Ascending aorta (tissue), 2 donors: ENCODE measurements at regions of chr1 and their contacts with region 1.

Region 1: DNA sequence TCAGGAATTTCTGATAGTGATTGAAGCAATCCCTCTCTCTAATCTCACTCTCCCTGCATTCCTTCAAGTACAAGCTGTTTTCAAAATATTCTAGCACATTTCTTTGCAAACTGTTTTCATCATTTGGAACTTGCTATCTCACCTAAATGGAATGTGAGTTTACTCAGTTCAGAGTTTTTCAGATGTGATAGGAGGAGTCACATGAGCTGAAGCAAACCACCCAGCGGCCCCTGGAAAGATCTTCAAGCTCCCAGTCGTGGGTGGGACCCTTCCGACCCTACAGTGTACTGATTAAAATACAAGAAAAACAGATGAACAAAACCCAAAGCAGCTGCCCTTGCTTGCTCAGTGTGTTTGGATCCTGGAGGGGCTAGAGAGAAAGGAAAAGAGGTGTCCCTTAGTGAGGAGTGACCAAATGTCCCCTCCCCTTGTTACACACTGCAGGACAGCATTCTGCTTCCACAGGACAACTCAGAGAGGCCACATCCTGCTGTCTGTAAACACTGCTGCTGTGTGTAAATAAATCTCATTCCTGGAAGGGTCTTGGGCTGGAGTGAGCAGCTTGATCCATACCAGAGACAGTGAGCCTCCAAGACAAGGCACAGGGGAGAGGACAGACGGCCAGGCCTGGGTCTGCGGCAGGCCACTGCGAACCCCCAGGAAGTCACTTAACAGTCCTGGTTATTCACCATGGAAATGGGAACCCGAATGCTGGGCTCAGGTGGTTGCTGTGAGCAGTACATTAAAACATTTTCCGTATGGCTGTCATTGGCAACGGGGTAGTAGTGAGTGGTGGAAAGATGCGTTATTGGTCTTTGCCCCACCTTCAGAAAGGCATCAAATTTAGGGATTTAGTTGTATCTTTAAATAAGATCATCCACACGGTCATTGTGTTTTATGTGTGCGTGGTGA is 229.2 kb downstream of the RHOU start:
- DNase-seq: peak in 1 of 2 donors; percentile 78
- H3K4me3 ChIP-seq: no peak overlapping the region
- H3K27ac ChIP-seq: peak overlapping the region; percentile 80 to 91
- H3K4me1 ChIP-seq: peaks cover 3 to 9% of the 10 kb centered on the region in 2 donors
- H3K27me3 ChIP-seq: no peaks in the 10 kb centered on the region
- CTCF ChIP-seq: no peak

Region 2: GRCh38 chr1:228921481-228921880 is 43.0 kb before region 1 on chr1:
- intact Hi-C with region 1: loop called (anchors 5 kb)
- DNase-seq: peak in 1 of 2 donors; percentile 19
- H3K4me3 ChIP-seq: no peak overlapping the region
- H3K27ac ChIP-seq: peak overlapping the region in 1 of 2 donors; percentile 89
- H3K4me1 ChIP-seq: peaks cover 0 to 13% of the 10 kb centered on the region in 2 donors
- H3K27me3 ChIP-seq: no peaks in the 10 kb centered on the region
- CTCF ChIP-seq: no peak

Region 3: DNA sequence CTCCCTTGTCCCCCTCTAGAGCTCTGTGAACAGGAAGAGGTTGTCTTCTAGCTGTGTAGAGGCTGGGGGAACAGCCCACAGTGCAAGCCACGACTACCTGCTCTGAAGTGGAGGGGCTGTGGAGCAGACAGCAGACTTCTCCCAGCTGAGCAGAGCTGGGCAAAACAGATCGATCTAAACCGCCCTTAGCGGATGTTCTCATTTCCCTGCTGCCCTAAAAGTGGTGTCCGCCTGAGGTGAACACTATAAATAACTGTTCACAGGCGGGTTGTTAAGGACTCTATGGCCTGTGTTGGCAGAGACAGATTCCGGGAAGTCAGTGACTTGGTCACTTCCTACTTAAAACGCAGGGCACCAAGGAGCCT is 25.9 kb before region 1 on chr1:
- intact Hi-C with region 1: loop called (anchors 2 kb)
- DNase-seq: peak in 1 of 2 donors; percentile 81
- H3K4me3 ChIP-seq: no peak overlapping the region
- H3K27ac ChIP-seq: peak overlapping the region; percentile 87 to 89
- H3K4me1 ChIP-seq: peaks cover 10 to 27% of the 10 kb centered on the region in 2 donors
- H3K27me3 ChIP-seq: no peaks in the 10 kb centered on the region
- CTCF ChIP-seq: no peak

Region 4: DNA sequence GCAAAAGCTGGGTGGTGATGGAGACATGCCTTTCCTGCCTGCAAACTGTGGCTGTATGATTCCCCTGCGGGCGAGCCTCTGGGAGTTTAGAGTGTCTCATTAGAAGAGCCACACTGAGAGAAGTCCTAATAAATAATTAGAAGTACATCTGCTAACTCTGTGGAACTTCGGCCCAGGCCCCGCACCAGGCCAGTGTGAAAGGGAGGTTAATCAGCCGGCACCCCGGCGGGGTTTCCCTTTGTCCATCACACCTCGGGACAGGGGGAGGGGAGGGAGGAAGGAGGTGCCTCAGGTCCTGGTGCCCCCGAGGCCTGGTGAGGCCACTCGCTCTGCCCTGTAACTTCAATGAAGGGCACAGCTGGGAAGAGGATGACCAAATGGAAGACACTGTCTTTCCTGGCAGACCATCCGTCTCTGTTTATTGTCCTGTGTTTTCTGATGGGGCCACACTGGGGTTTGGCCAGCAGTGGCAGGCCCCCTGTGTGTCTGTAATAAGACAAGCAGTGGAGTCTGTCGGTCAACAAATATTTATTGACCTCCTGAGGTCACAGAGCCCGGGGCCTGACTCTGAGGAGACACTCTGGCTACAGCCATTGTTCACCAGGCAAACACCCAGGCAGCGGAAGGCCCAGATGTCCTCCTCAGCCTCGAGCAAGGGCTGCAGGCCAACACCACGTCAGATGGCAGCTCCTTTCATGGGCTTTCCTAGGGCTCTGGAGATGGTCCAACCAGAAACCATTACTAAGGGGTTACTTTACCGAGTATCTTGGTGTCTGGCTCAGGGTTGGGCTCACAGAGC is 39.0 kb after region 1 on chr1:
- intact Hi-C with region 1: no loop called
- DNase-seq: peak in 1 of 2 donors; percentile 77
- H3K4me3 ChIP-seq: no peak overlapping the region
- H3K27ac ChIP-seq: peak overlapping the region; percentile 54 to 79
- H3K4me1 ChIP-seq: no peaks in the 10 kb centered on the region
- H3K27me3 ChIP-seq: no peaks in the 10 kb centered on the region
- CTCF ChIP-seq: no peak

Region 5: DNA sequence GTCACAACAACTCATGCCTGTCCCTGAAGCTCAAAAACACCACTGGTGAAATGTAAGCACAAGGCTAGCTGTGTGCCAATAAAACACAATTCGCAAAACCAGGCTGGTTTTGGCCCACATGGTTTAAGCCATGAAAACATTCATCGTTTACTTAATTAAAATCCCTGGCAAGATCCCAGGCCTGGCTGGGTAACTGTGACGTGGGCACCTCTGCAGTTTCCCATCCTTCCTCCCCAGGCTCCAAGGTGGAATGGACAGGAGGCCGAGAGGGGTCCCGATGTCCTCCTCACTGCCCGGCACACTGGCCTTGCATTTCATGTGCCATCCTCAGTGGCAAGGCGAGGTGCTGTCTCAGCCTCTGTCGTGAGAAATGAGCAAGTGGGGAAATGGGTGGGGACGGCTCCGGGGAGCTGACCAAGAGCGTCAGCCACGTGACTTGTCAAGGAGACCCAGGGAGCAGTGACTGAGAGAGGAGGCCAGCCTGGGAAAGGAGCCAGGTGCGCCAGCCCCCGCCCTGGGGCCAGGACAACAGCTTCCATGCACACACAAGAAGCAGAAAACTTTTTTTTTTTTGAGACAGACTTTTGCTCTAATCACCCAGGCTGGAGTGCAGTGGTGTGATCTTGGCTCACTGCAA is 153.3 kb after region 1 on chr1:
- intact Hi-C with region 1: loop called (anchors 5 kb)
- DNase-seq: peak; percentile 46 to 94
- H3K4me3 ChIP-seq: no peak overlapping the region
- H3K27ac ChIP-seq: peak overlapping the region; percentile 56 to 72
- H3K4me1 ChIP-seq: peaks cover 4 to 35% of the 10 kb centered on the region in 2 donors
- H3K27me3 ChIP-seq: no peaks in the 10 kb centered on the region
- CTCF ChIP-seq: no peak

Region 6: DNA sequence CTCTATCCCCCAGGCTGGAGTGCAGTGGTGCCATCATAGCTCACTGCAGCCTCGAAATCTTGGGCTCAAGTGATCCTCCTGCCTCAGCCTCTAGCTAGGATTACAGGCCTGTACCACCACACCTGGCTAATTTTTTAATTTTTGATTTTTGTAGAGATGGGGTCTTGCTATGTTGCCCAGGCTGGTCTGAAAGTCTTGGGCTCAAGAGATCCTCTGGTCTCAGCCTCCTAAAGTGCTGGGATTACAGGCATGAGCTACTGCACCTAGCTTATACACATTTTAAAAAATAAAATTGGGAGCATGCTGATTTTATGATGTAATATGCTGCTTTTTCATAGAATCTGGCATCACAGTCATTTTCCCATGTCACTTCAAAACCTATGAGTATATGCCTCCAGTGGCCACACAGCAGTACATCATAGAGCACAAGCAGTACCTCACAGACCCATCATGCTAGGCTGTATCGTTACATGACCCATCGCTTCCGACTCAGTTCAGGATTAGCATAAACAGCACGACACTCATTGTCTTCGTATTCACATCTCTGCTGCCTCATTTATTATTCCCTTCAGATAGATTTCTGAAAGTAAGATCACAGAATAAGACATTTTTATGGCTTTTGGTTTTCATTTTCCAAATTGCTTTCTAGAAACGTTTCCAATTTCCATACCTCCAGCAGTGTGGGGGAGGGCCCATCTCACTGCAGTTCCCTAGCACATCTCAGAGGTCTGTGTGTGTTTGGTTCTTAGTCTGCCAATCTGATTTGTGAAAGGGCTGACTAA is 414.3 kb after region 1 on chr1:
- intact Hi-C with region 1: no loop called
- DNase-seq: no peak
- H3K4me3 ChIP-seq: no peak overlapping the region
- H3K27ac ChIP-seq: no peak overlapping the region
- H3K4me1 ChIP-seq: no peaks in the 10 kb centered on the region
- H3K27me3 ChIP-seq: no peaks in the 10 kb centered on the region
- CTCF ChIP-seq: no peak